Prostate gland (tissue), 2 donors: ENCODE measurements at regions of chr19 and their contacts with region 1.

Region 1: GRCh38 chr19:39328046-39328705 is 7.5 kb upstream of the LRFN1 start:
- DNase-seq: peak; percentile 80
- H3K4me3 ChIP-seq: no peak overlapping the region
- H3K27ac ChIP-seq: no peak overlapping the region
- H3K4me1 ChIP-seq: no peaks in the 10 kb centered on the region
- H3K27me3 ChIP-seq: no peaks in the 10 kb centered on the region
- CTCF ChIP-seq: peak; percentile 89 to 97 (median 94)
- POLR2A ChIP-seq: no peak

Region 2: DNA sequence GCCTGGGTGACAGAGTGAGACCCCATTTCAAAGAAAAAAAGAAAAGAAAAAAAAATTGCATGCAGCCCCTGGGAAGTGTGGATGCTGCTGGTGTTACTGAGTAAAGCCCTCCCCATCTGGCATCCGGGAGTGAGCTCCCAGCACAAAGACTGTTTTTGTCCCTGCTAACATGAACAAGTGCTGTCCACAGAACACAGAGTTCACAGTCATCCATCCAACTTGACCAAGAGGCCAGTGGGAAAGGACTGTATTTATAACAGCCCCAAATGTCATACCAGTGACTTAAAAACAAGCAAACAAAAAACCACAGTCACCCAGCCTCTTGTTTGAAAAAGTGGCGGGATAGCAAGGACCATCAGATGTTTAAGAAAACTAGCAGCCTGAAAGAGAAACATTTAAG is 363.4 kb before region 1 on chr19:
- intact Hi-C with region 1: loop called (anchors 10 kb)
- DNase-seq: no peak
- H3K4me3 ChIP-seq: no peak overlapping the region
- H3K27ac ChIP-seq: no peak overlapping the region
- H3K4me1 ChIP-seq: no peaks in the 10 kb centered on the region
- H3K27me3 ChIP-seq: no peaks in the 10 kb centered on the region
- CTCF ChIP-seq: no peak
- POLR2A ChIP-seq: no peak